ENCODE measurements at regions of chr9 and their contacts with region 1.

Region 1: DNA sequence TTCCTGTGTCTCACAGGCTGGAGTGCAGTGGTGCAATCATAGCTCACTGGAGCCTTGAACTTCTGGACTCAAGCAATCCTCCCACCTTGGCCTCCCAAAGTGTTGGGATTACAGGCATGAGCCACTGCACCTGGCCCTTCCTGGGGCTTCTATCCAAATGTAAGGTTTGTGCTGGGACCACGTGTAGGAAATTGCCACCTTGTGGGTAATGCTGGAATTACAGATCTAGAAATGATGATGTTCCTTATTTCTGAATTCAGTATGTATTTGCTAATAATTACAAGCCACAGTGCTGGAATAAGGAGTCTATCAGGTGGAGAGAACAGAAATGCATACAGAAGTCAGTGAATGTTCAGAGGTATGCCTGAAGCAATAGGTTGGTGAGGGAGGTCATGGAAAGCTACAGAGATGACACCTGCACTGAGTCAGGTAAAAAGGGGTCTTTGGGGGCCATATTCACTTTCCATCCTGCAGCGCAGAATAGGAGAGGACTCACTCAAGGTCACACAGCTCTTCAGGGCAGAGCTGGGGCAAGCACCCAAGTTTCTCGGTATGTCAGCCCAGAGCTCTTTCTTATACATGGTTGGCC is 8.8 kb upstream of the IGFBPL1 start:
- DNase-seq: no peak
- ATAC-seq: peak; percentile 72
- H3K4me3 ChIP-seq: no peak overlapping the region
- H3K27ac ChIP-seq: no peak overlapping the region
- H3K4me1 ChIP-seq: no peaks in the 10 kb centered on the region
- H3K27me3 ChIP-seq: no peaks in the 10 kb centered on the region; a peak in 1 of 4 replicates
- CTCF ChIP-seq: peak; percentile 52 to 61 (median 60)
- EP300 ChIP-seq: no peak
- POLR2A ChIP-seq: no peak
- RAD21 ChIP-seq: peak; percentile 50

Region 2: DNA sequence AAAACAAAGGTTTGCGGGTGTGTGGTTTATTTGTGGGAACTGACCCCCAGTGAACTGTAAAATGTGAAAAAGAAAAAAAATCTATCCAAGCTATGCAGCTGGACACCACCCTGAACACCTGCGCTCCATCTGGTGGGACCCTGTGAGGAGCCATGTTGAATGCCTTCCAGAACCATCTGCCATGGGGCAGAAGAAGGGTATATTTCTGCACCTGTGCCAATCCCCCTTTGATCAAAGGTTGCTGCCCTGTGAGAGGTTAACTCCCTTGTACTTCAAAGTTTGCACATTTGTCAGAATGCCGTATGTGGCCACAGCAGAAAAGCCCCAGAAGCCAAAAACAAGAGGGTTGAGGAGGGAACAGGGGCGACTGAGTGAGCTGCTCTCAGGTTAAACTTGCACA is 189.0 kb before region 1 on chr9:
- CTCF ChIA-PET with region 1: no interaction called
- POLR2A ChIA-PET with region 1: no interaction called
- RAD21 ChIA-PET with region 1: no interaction called
- SMC1A ChIA-PET with region 1: no interaction called
- in situ Hi-C with region 1: no loop called
- intact Hi-C with region 1: no loop called
- DNase-seq: no peak
- ATAC-seq: no peak
- H3K4me3 ChIP-seq: no peak overlapping the region
- H3K27ac ChIP-seq: no peak overlapping the region
- H3K4me1 ChIP-seq: no peaks in the 10 kb centered on the region
- H3K27me3 ChIP-seq: no peaks in the 10 kb centered on the region
- CTCF ChIP-seq: no peak
- EP300 ChIP-seq: no peak
- POLR2A ChIP-seq: no peak
- RAD21 ChIP-seq: no peak

Region 3: GRCh38 chr9:38294220-38294960 is 138.6 kb before region 1 on chr9:
- CTCF ChIA-PET with region 1: no interaction called
- POLR2A ChIA-PET with region 1: no interaction called
- RAD21 ChIA-PET with region 1: no interaction called
- SMC1A ChIA-PET with region 1: no interaction called
- in situ Hi-C with region 1: no loop called
- intact Hi-C with region 1: no loop called
- DNase-seq: no peak
- ATAC-seq: no peak
- H3K4me3 ChIP-seq: no peak overlapping the region
- H3K27ac ChIP-seq: no peak overlapping the region
- H3K4me1 ChIP-seq: no peaks in the 10 kb centered on the region
- H3K27me3 ChIP-seq: no peaks in the 10 kb centered on the region; a peak in 1 of 4 replicates
- CTCF ChIP-seq: no peak
- EP300 ChIP-seq: no peak
- POLR2A ChIP-seq: no peak
- RAD21 ChIP-seq: no peak

Region 4: DNA sequence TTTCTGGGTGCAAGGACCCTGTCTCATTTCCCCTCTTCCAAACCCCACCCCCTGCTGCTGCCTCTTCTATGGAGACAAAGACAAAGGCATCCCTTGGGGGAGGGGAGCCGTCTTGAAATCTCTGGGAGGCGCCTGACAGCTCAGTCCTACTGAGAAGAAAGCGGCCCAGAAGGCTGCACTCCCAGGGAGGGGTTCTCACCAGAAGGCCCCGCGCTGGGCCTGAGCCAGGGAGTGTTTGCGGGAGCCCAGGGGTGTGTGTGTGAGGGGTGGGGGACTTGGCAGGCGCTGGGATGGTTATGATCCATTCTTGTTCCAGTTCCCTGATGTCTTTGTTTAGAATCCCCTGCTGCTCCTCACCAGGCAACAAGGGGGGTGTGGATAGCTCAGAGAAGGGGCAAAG is 86.2 kb before region 1 on chr9:
- CTCF ChIA-PET with region 1: no interaction called
- POLR2A ChIA-PET with region 1: no interaction called
- RAD21 ChIA-PET with region 1: no interaction called
- SMC1A ChIA-PET with region 1: no interaction called
- in situ Hi-C with region 1: no loop called
- intact Hi-C with region 1: no loop called
- DNase-seq: no peak
- ATAC-seq: no peak
- H3K4me3 ChIP-seq: no peak overlapping the region
- H3K27ac ChIP-seq: no peak overlapping the region
- H3K4me1 ChIP-seq: no peaks in the 10 kb centered on the region
- H3K27me3 ChIP-seq: no peaks in the 10 kb centered on the region; a peak in 1 of 4 replicates
- CTCF ChIP-seq: no peak
- EP300 ChIP-seq: no peak
- POLR2A ChIP-seq: no peak
- RAD21 ChIP-seq: no peak

Region 5: DNA sequence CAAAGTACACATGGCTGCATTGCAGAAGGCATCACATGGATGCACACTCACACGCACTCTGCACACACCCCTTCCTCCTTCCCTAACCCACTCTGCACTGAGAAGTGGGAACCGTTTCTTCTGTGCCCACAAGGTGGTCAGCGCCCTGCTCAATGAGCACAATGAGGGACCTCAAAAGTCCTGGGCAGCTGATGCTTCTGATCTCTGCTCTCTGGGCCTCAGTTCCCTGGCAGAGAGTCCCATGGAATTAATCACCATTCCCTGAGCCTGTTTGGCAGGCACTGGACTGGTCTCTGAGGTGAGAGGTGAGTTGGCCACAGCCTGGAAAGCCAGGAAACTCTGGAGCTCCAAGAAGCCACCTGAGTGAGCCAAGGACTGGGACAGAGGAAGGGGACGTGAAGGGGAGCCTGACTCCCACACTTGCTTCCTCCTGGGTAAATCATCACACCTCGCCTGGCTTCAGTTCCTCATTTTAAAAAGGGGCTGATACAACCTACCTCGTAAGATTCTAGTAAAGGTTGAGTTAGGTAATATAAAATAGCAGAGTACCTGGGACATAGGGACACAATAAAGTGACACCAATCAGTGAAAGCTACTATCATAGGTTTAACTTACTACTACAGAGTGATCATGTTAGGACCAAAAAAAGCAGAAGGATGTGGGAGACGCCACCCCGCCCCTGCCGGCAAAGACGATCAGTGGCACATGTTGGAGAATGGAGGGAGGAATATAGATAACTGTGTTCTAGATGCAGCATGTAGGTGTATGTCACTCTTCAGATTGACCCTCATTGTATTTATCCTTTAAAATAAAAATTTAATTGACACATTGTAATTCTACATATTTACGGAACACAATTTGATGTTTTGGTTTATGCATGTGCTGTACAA is 12.4 kb after region 1 on chr9:
- CTCF ChIA-PET with region 1: interaction called, 7 read pairs
- POLR2A ChIA-PET with region 1: interaction called, 3 read pairs
- RAD21 ChIA-PET with region 1: no interaction called
- SMC1A ChIA-PET with region 1: interaction called, 16 read pairs
- in situ Hi-C with region 1: no loop called
- intact Hi-C with region 1: no loop called
- DNase-seq: no peak
- ATAC-seq: peak; percentile 97
- H3K4me3 ChIP-seq: no peak overlapping the region
- H3K27ac ChIP-seq: no peak overlapping the region
- H3K4me1 ChIP-seq: peaks cover 4% of the 10 kb centered on the region; the same call in 1 of the 2 replicates
- H3K27me3 ChIP-seq: no peaks in the 10 kb centered on the region; a peak in 1 of 4 replicates
- CTCF ChIP-seq: no peak
- EP300 ChIP-seq: 0 out of 4 replicates have a peak, but pooled peaks of 1 of the 2 experiments have one; percentile 53
- POLR2A ChIP-seq: no peak
- RAD21 ChIP-seq: no peak

Region 6: GRCh38 chr9:38467404-38467803 is 34.4 kb after region 1 on chr9:
- CTCF ChIA-PET with region 1: interaction called, 4 read pairs
- POLR2A ChIA-PET with region 1: no interaction called
- RAD21 ChIA-PET with region 1: interaction called, 4 read pairs
- SMC1A ChIA-PET with region 1: interaction called, 16 read pairs
- in situ Hi-C with region 1: no loop called
- intact Hi-C with region 1: no loop called
- DNase-seq: no peak
- ATAC-seq: peak; percentile 51
- H3K4me3 ChIP-seq: no peak overlapping the region
- H3K27ac ChIP-seq: no peak overlapping the region
- H3K4me1 ChIP-seq: no peaks in the 10 kb centered on the region
- H3K27me3 ChIP-seq: peaks cover 0 to 3% of the 10 kb centered on the region in 2 experiments; a peak in 1 of 4 replicates
- CTCF ChIP-seq: no peak
- EP300 ChIP-seq: no peak
- POLR2A ChIP-seq: no peak
- RAD21 ChIP-seq: no peak